GM10248 (cell line): ENCODE measurements at regions of chr9 and their contacts with region 1.

Region 1: GRCh38 chr9:97386733-97387503 is 25.0 kb upstream of the TDRD7 start:
- DNase-seq: peak; percentile 84
- CTCF ChIP-seq: peak; percentile 95

Region 2: DNA sequence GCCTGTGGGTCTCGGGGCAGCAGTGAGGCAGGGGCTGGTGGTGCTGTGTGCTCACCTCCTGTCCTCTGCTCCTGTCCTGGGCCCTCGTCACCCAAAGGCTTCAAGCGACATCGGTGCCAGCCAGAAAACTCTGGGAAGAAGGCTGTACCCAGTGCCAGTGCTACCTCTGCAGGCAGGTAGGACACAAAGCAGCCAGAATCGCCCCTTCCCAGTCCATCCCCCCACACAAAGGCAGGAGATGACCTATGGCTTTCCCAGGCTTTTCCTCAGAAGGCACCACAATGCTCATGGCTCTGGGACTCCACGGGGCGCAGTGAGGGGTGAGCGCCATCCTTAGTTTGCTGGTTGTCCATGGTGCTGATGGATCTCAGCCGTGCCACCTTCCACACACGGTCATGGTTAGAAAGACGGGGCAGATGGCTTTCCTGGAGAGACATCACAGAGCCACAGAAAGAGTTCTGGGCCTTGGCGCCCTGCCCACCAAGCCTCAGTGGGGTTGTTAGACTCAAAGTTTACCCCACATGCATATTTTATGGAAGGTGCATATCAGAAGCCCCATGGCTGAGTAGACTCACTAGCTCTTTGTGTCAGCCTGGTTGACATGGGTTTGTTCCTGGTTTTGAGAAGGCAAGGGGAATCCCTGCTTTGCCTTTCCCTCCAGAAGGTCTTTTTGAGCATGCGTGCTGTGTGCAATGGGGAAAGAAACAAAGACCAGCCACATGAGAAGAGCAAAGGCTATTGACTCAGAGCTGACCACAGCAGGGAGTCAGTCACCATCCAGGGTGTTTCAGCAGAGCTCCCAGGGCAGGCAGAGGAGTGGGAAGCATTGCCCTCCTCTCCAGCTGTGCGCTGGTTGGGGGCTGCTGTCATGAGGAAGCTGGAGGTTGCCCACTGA is 24.4 kb before region 1 on chr9:
- CTCF ChIA-PET with region 1: interaction called, 52 read pairs
- POLR2A ChIA-PET with region 1: no interaction called
- DNase-seq: peak; percentile 51
- CTCF ChIP-seq: no peak

Region 3: DNA sequence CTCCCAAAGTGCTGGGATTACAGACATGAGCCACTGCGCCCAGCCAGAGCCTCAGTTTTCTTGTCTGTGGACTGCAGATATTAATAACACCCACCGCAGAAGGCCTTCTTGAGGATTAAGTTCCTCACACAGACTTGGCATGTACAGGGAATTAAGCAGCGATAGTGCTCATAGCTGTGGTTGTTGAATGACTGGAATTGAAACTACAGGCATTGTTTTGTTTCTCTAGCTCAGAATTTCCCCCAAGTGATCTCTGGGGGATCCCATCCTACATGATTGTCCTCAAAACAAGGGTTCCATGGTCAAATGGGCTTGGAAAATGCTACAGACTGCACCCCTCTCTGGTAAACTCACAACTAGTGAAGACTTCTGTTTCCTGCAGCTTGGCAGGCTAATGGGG is 19.2 kb before region 1 on chr9:
- CTCF ChIA-PET with region 1: interaction called, 52 read pairs
- POLR2A ChIA-PET with region 1: no interaction called
- DNase-seq: no peak
- CTCF ChIP-seq: no peak

Region 4: DNA sequence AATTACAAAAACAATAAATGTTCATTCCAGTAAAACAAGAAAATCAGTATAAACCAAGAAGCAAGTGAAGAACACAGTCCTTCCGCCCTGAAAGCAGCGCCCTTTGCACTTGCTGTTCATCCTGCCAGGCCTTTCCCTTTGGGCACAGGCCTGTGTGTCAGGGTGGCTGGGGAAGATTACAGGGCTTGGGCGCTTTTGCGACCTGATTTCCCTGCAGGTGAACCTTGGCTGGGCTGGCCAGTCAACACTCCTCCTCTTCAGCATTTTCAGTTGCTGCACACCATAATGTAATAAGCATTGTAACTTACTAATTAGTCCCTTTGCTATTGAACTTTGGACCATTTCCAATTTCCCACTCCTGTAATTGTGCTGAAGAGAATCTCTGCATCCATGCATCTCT is 13.6 kb before region 1 on chr9:
- CTCF ChIA-PET with region 1: interaction called, 53 read pairs
- POLR2A ChIA-PET with region 1: no interaction called
- DNase-seq: no peak
- CTCF ChIP-seq: no peak

Region 5: GRCh38 chr9:97398999-97399758 is 12.3 kb after region 1 on chr9:
- CTCF ChIA-PET with region 1: interaction called, 78 read pairs
- POLR2A ChIA-PET with region 1: no interaction called
- DNase-seq: peak; percentile 84
- CTCF ChIP-seq: peak; percentile 95

Region 6: DNA sequence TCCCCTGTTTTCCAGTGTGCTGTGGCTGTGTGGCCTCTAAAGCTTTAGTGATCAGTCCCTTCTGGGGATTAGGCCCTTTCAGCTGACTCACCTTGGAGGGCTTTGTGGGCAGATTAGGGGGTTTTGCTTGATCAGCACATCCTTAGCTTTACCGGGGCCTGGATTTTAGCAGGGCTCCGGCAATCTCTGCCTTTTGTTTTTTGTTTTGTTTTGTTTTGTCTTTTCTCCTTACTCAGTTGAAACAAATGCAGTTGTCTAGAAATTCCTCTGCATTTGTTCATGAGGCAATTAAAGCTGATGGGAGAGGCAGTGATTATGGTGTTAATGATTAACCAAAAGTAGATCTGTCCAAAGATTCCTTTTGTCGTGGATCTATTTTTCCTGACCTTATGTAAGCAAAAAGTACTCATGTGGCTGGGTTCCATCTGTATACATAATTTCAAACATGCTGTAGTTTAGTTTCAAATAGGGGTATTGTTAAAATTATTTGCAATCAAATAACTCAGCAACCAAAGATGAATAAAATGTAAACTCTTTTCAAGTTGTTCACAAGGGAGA is 19.8 kb after region 1 on chr9:
- CTCF ChIA-PET with region 1: interaction called, 31 read pairs
- POLR2A ChIA-PET with region 1: no interaction called
- DNase-seq: no peak
- CTCF ChIP-seq: no peak

Region 7: GRCh38 chr9:97411789-97412625 is 25.1 kb after region 1 on chr9 and contains the start of gene TDRD7:
- CTCF ChIA-PET with region 1: interaction called, 31 read pairs
- POLR2A ChIA-PET with region 1: no interaction called
- DNase-seq: peak; percentile 98
- CTCF ChIP-seq: peak; percentile 100